HCT116 (cell line): ENCODE measurements at regions of chr5 and their contacts with region 1.

Region 1: DNA sequence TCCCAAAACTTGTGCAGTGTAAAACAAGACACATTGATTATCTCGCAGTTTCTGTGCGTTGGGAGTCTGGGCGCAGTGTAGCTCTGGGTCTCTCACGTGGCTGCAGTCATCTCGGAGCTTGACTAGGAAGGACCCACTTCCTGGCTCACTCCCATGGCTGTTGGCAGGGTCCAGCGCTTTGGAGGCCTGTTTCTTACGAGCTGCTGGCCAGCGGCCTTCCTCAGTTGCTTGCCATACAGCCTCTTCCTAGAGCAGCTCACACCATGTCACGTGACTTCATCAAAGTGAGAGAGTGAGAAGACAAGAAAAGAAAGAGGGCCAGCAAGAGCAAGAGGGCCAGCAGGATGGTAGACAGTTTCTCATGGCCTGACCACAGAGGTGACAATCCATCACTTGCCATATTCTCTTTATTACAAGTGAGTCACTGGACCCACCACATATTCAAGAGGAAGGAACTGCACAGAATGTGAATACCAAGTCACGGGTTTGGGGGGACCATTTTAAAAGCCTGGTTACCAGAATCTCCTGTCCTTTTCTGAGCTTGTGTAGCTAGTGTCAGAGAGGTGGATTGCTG is 36.2 kb downstream of the MCCC2 start:
- DNase-seq: no peak
- ATAC-seq: no peak
- H3K4me3 ChIP-seq: no peak overlapping the region
- H3K27ac ChIP-seq: no peak overlapping the region
- H3K4me1 ChIP-seq: peaks cover 5 to 11% of the 10 kb centered on the region in 2 experiments; a peak in 2 of 4 replicates
- H3K27me3 ChIP-seq: no peaks in the 10 kb centered on the region
- CTCF ChIP-seq: no peak
- POLR2A ChIP-seq: no peak
- RAD21 ChIP-seq: no peak

Region 2: DNA sequence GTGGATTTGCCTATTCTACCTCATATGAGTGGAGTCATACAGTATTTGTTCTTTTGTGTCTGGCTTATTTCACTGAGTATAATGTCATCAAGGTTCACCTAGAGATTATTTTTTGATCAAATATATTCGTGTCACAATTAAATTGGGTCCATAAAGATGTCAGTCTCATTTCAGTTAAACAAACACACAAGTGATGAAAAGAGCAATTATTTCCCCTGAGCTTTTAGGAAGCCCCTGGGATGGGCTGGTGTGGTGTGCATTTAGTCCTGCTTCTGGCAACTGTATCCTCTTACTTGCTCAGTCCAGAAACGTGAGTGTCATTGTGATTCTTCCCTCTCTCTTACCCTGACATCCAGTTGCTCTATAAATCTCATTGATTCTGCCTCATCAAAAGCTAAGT is 43.0 kb after region 1 on chr5:
- CTCF ChIA-PET with region 1: no interaction called
- POLR2A ChIA-PET with region 1: no interaction called
- RAD21 ChIA-PET with region 1: no interaction called
- intact Hi-C with region 1: loop called (anchors 5 kb)
- DNase-seq: no peak
- ATAC-seq: no peak
- H3K4me3 ChIP-seq: no peak overlapping the region
- H3K27ac ChIP-seq: no peak overlapping the region
- H3K4me1 ChIP-seq: peaks cover 0 to 10% of the 10 kb centered on the region in 2 experiments; a peak in 1 of 4 replicates
- H3K27me3 ChIP-seq: no peaks in the 10 kb centered on the region
- CTCF ChIP-seq: no peak
- POLR2A ChIP-seq: no peak
- RAD21 ChIP-seq: no peak

Region 3: DNA sequence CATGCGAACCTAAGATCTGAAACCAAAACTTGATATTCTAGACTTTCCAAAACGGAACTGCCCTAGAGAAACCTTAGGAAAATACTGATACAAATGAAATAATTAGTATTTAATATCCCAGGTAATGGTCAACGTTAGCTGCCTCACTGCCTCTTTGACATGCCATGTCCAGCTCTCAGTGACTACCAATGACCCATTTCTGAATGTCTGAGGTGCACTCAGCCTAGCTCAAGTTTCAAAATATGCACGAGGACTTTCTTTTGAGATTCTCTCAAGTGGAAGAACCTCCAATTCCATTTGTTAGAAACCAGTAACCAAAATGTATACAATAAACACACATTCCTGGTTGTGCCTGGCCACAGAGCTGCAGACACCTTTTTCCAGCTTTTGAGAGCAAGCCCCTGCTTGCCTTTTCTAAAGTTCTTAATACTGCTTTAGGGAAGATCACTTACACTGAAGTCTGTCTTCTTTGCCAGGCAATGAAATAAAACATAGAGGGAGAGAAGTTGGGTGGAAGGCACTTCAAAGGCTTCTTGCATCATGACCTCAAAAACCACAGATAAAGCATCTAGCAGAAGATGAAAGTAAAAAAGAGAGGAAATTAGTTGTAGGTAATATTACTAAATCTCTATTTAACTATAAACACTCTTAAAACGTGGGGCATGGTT is 608.8 kb after region 1 on chr5:
- CTCF ChIA-PET with region 1: no interaction called
- POLR2A ChIA-PET with region 1: no interaction called
- RAD21 ChIA-PET with region 1: no interaction called
- intact Hi-C with region 1: no loop called
- DNase-seq: no peak
- ATAC-seq: no peak
- H3K4me3 ChIP-seq: no peak overlapping the region
- H3K27ac ChIP-seq: no peak overlapping the region
- H3K4me1 ChIP-seq: peaks cover 38 to 40% of the 10 kb centered on the region in 2 experiments
- H3K27me3 ChIP-seq: no peaks in the 10 kb centered on the region
- CTCF ChIP-seq: no peak
- POLR2A ChIP-seq: no peak
- RAD21 ChIP-seq: no peak